ENCODE measurements at regions of chr1 and their contacts with region 1.

Region 1: GRCh38 chr1:209354111-209354839 is 229.2 kb upstream of the CAMK1G start:
- DNase-seq: peak; percentile 62 to 80
- ATAC-seq: peak; percentile 73

Region 2: GRCh38 chr1:209202830-209203439 is 151.3 kb before region 1 on chr1:
- intact Hi-C with region 1: loop called in 1 of 2 experiments (anchors 5 kb)
- DNase-seq: no peak
- ATAC-seq: no peak

Region 3: GRCh38 chr1:209774592-209774991 is 420.3 kb after region 1 on chr1:
- intact Hi-C with region 1: no loop called
- DNase-seq: no peak
- ATAC-seq: no peak

Measured in left colon (tissue), 2 donors.